ENCODE measurements at regions of chr2 and their contacts with region 1.

Region 1: DNA sequence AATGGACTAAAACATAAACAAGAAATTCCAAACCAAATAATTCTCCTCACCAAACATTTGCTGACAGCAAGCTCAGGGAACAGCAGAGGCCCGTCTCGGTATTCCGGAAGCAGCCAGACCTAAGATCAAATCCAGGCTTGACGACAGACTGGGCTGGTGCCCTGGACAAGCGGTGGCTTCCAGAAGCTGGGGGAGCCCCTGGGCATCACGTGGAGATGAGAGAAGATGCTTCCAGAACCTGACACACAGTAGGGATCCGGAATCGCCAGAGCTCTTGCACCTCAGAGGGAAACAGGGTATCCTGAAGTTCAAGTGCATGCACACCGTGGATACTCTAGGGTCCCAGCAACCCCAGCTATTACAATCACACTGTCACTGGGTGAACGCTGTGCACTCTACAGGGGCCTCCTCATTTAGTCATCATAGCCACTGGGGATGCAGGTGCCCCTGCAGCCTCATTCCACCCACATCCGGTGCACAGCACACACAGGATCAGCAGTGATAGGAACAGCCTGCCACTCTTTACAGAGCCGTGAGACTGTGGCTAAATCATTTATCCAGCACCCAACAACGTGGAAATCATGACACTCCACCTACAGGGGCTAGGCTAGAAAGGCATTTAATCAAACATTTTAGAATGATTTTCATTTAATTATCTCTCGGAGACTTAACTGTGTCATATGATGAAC is 102.6 kb downstream of the HDAC4 start:
- DNase-seq: peak; percentile 75 to 94 (median 83)
- H3K4me3 ChIP-seq: peak overlapping the region; percentile 56 to 58
- H3K4me3 Mint-ChIP-seq: peak overlapping the region; percentile 86 to 92 (median 90)
- H3K27ac ChIP-seq: peak overlapping the region; percentile 64
- H3K27ac Mint-ChIP-seq: peak overlapping the region; percentile 92 to 98 (median 95)
- H3K4me1 ChIP-seq: peaks cover 61% of the 10 kb centered on the region
- H3K4me1 Mint-ChIP-seq: peaks cover 36 to 79% (median 57%) of the 10 kb centered on the region in 4 donors
- H3K27me3 ChIP-seq: no peaks in the 10 kb centered on the region
- H3K27me3 Mint-ChIP-seq: no peaks in the 10 kb centered on the region

Region 2: GRCh38 chr2:238811759-238812158 is 486.5 kb before region 1 on chr2:
- CTCF ChIA-PET with region 1: no interaction called
- POLR2A ChIA-PET with region 1: no interaction called
- intact Hi-C with region 1: no loop called
- DNase-seq: no peak
- H3K4me3 ChIP-seq: no peak overlapping the region
- H3K4me3 Mint-ChIP-seq: no peak overlapping the region
- H3K27ac ChIP-seq: no peak overlapping the region
- H3K27ac Mint-ChIP-seq: no peak overlapping the region
- H3K4me1 ChIP-seq: no peaks in the 10 kb centered on the region
- H3K4me1 Mint-ChIP-seq: no peaks in the 10 kb centered on the region
- H3K27me3 ChIP-seq: no peaks in the 10 kb centered on the region
- H3K27me3 Mint-ChIP-seq: peaks cover 5 to 24% of the 10 kb centered on the region in 2 donors

Region 3: GRCh38 chr2:239035361-239036078 is 262.7 kb before region 1 on chr2:
- CTCF ChIA-PET with region 1: no interaction called
- POLR2A ChIA-PET with region 1: no interaction called
- intact Hi-C with region 1: loop called (anchors 1 kb)
- DNase-seq: peak; percentile 46 to 63 (median 54)
- H3K4me3 ChIP-seq: no peak overlapping the region
- H3K4me3 Mint-ChIP-seq: no peak overlapping the region
- H3K27ac ChIP-seq: no peak overlapping the region
- H3K27ac Mint-ChIP-seq: no peak overlapping the region
- H3K4me1 ChIP-seq: no peaks in the 10 kb centered on the region
- H3K4me1 Mint-ChIP-seq: no peaks in the 10 kb centered on the region
- H3K27me3 ChIP-seq: no peaks in the 10 kb centered on the region
- H3K27me3 Mint-ChIP-seq: peaks cover 3 to 8% of the 10 kb centered on the region in 2 donors

Region 4: DNA sequence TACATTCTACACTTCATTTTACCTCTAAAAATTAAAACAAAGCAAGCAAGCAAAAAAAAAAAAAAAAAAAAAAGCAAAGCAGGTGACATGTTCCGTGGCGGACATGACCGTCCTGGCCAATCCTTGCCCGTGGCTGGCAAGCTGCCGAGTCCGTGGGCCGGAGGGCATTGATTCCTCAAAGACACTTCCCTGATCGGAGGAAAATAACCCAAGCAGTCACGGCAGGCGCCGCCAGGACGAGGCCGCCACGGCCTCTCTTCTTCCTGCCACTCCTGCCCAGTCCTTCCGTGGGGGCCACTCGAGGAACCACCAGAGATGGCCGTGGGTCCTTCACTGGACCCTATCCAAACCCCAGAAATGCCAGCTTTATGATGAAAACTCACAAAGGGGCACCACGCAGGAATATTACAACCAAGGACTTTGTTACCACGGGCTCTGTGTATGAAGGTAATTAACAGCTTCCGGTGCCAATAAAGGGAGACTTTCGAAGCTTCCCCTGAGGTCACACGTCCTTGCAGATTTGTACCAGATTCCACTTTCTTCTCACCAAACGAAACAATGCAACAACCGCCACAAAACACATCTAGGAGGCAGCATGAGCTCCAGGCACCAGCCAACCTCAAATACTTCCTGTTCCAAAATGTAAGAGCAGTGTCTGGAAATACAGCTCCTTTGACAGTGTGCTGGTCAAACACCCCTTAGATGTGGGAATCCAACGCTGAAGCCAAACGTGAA is 67.8 kb before region 1 on chr2:
- CTCF ChIA-PET with region 1: no interaction called
- POLR2A ChIA-PET with region 1: interaction called, 3 read pairs
- intact Hi-C with region 1: loop called (anchors 2 kb)
- DNase-seq: peak; percentile 24 to 58 (median 44)
- H3K4me3 ChIP-seq: peak overlapping the region in 1 of 2 donors; percentile 3
- H3K4me3 Mint-ChIP-seq: peak overlapping the region; percentile 2 to 82 (median 67)
- H3K27ac ChIP-seq: peak overlapping the region; percentile 60
- H3K27ac Mint-ChIP-seq: peak overlapping the region; percentile 71 to 93 (median 85)
- H3K4me1 ChIP-seq: peaks cover 60% of the 10 kb centered on the region
- H3K4me1 Mint-ChIP-seq: peaks cover 43 to 87% (median 65%) of the 10 kb centered on the region in 4 donors
- H3K27me3 ChIP-seq: no peaks in the 10 kb centered on the region
- H3K27me3 Mint-ChIP-seq: no peaks in the 10 kb centered on the region

Region 5: GRCh38 chr2:239318790-239319661 is 20.8 kb after region 1 on chr2:
- CTCF ChIA-PET with region 1: interaction called, 19 read pairs
- POLR2A ChIA-PET with region 1: interaction called, 18 read pairs
- intact Hi-C with region 1: loop called (anchors 1 kb)
- DNase-seq: no peak
- H3K4me3 ChIP-seq: peak overlapping the region in 1 of 2 donors; percentile 28
- H3K4me3 Mint-ChIP-seq: peak overlapping the region; percentile 73 to 93 (median 80)
- H3K27ac ChIP-seq: peak overlapping the region; percentile 49
- H3K27ac Mint-ChIP-seq: peak overlapping the region; percentile 81 to 96 (median 94)
- H3K4me1 ChIP-seq: peaks cover 44% of the 10 kb centered on the region
- H3K4me1 Mint-ChIP-seq: peaks cover 42 to 78% (median 55%) of the 10 kb centered on the region in 4 donors
- H3K27me3 ChIP-seq: no peaks in the 10 kb centered on the region
- H3K27me3 Mint-ChIP-seq: no peaks in the 10 kb centered on the region

Region 6: GRCh38 chr2:239348563-239349447 is 50.5 kb after region 1 on chr2:
- CTCF ChIA-PET with region 1: no interaction called
- POLR2A ChIA-PET with region 1: no interaction called
- intact Hi-C with region 1: no loop called
- DNase-seq: no peak
- H3K4me3 ChIP-seq: no peak overlapping the region
- H3K4me3 Mint-ChIP-seq: no peak overlapping the region
- H3K27ac ChIP-seq: no peak overlapping the region
- H3K27ac Mint-ChIP-seq: peak overlapping the region in 2 of 7 donors; percentile 15 to 62
- H3K4me1 ChIP-seq: peaks cover 7% of the 10 kb centered on the region
- H3K4me1 Mint-ChIP-seq: peaks cover 0 to 9% (median 0%) of the 10 kb centered on the region in 4 donors
- H3K27me3 ChIP-seq: no peaks in the 10 kb centered on the region
- H3K27me3 Mint-ChIP-seq: no peaks in the 10 kb centered on the region

Region 7: DNA sequence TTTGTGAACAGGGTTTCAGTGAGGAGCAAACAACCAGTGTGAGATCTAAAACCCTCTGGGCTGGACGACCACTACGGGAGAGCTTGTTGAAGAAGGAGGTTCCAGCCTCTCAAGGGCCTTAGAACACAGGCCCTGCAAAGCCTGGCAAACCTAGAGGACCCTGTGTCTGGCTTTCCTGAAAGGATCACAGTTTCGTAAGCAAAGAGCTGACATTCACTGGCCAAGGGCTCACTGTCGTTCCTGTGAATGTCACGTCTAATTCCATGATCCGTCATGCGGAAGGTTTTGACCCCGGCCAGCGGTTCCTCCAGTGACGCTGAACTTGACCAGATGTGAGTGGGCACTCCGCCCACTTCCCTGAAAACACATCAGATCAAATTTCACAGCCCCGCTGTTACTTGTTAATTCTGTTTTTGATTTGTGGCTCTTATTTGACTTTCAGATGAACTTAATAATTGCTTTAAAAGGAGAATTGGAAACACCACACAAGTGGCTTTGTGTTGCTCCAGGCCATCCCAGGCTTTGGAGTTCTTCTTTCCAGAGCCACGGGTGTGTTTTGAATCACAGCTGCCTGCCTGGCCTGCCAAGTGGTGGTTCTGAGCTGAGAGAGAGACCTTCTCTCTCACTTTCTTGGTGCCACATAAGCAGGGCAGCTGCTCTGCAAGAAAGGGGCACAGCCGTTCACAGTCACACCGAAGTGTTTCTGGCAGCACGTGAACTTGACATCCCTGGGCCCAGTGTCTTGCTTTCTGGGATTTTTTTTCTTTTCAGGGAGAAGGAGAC is 418.5 kb after region 1 on chr2:
- CTCF ChIA-PET with region 1: no interaction called
- POLR2A ChIA-PET with region 1: no interaction called
- intact Hi-C with region 1: no loop called
- DNase-seq: no peak
- H3K4me3 ChIP-seq: no peak overlapping the region
- H3K4me3 Mint-ChIP-seq: no peak overlapping the region
- H3K27ac ChIP-seq: no peak overlapping the region
- H3K27ac Mint-ChIP-seq: no peak overlapping the region
- H3K4me1 ChIP-seq: no peaks in the 10 kb centered on the region
- H3K4me1 Mint-ChIP-seq: no peaks in the 10 kb centered on the region
- H3K27me3 ChIP-seq: no peaks in the 10 kb centered on the region
- H3K27me3 Mint-ChIP-seq: peaks cover 4 to 9% of the 10 kb centered on the region in 2 donors

Region 8: DNA sequence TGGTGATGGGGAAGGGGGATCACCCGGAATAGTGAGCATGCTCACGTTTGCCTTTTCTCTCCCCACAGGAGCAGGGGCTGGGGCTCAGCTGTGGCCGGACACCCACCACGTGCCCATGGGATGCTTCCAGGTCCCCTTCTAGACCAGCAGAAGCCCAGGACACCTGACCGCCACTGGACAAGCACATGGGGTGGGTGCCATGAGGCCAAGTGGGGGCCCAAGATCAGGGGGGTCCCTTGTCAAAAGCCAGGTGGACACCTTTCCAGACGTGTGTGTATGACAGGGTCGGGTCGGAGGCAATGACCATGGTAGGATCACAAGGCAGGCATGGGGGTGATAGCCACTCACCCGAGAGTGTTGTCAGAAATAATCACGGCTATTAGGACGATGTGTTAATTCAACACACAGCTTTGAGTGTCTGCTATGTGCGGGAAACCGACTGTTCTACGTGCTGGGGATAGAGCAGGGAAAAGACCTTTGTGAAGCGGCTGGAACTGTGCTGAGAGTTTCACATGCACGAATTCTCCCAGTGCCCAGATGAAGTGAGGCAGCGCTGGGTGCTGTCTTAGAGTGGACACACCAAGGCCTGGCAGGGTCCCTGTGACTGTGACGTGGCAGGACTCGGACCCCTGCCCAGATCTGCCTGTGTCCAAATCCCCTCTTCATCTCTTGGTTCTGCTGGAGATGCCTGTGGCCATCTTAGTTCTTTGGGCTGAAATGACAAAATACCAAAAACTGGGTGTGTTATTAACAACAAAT is 482.2 kb after region 1 on chr2:
- CTCF ChIA-PET with region 1: no interaction called
- POLR2A ChIA-PET with region 1: no interaction called
- intact Hi-C with region 1: no loop called
- DNase-seq: no peak
- H3K4me3 ChIP-seq: no peak overlapping the region
- H3K4me3 Mint-ChIP-seq: peak overlapping the region in 1 of 8 donors; percentile 41
- H3K27ac ChIP-seq: no peak overlapping the region
- H3K27ac Mint-ChIP-seq: no peak overlapping the region
- H3K4me1 ChIP-seq: no peaks in the 10 kb centered on the region
- H3K4me1 Mint-ChIP-seq: no peaks in the 10 kb centered on the region
- H3K27me3 ChIP-seq: no peaks in the 10 kb centered on the region
- H3K27me3 Mint-ChIP-seq: peaks cover 5 to 10% of the 10 kb centered on the region in 2 donors

Region 9: DNA sequence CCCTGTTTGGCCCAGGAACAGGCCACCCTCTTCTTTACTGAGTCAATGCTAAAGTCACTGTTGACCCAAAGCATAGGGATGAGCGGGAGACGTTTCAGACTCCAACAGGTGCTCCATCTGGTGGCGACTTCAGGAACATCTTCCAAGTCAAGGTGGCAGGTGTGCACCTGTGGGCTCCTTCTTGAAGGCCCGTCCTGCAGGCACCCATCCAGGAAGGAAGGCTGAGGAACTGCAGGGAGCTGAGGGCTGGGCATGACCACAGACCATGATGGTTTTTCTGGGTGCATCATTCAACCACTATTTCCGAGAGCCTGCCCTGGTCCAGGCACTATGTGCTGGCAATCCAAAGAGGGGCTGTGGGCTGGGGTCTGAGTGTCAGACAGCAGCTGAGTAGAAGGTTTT is 584.1 kb after region 1 on chr2:
- CTCF ChIA-PET with region 1: no interaction called
- POLR2A ChIA-PET with region 1: no interaction called
- intact Hi-C with region 1: loop called (anchors 1 kb)
- DNase-seq: peak; percentile 50 to 67 (median 56)
- H3K4me3 ChIP-seq: no peak overlapping the region
- H3K4me3 Mint-ChIP-seq: peak overlapping the region in 1 of 8 donors; percentile 3
- H3K27ac ChIP-seq: no peak overlapping the region
- H3K27ac Mint-ChIP-seq: peak overlapping the region in 2 of 7 donors; percentile 5 to 67
- H3K4me1 ChIP-seq: peaks cover 8% of the 10 kb centered on the region
- H3K4me1 Mint-ChIP-seq: peaks cover 6 to 13% (median 8%) of the 10 kb centered on the region in 4 donors
- H3K27me3 ChIP-seq: no peaks in the 10 kb centered on the region
- H3K27me3 Mint-ChIP-seq: peaks cover 1 to 4% of the 10 kb centered on the region in 2 donors

Measured in CD4-positive, alpha-beta memory T cell (primary cell).